OCI-LY7 (cell line): ENCODE measurements at regions of chr17 and their contacts with region 1.

Region 1: GRCh38 chr17:42908872-42909700 is 8.5 kb downstream of the G6PC1 start:
- DNase-seq: peak; percentile 79
- H3K4me3 ChIP-seq: peak overlapping the region; percentile 28
- H3K27ac ChIP-seq: peak overlapping the region; percentile 77
- H3K4me1 ChIP-seq: peaks cover 47% of the 10 kb centered on the region
- CTCF ChIP-seq: no peak

Region 2: GRCh38 chr17:42832974-42833766 is 75.9 kb before region 1 on chr17 and contains the start of gene PSME3:
- CTCF ChIA-PET with region 1: no interaction called
- POLR2A ChIA-PET with region 1: interaction called, 3 read pairs
- intact Hi-C with region 1: loop called (anchors 5 kb)
- DNase-seq: peak; percentile 91
- H3K4me3 ChIP-seq: peak within 1 kb of the TSS; percentile 99
- H3K27ac ChIP-seq: peak within 1 kb of the TSS; percentile 60
- H3K4me1 ChIP-seq: peaks cover 15% of the 10 kb centered on the region
- CTCF ChIP-seq: no peak
- total RNA-seq, gene PSME3: 80.3 and 81.9 TPM in 2 replicates